ENCODE measurements at regions of chr3 and their contacts with region 1.

Region 1: GRCh38 chr3:194849166-194849875 is 163.6 kb downstream of the FAM43A start:
- DNase-seq: no peak
- ATAC-seq: no peak
- H3K4me3 ChIP-seq: no peak overlapping the region
- H3K27ac ChIP-seq: no peak overlapping the region
- H3K4me1 ChIP-seq: no peaks in the 10 kb centered on the region
- H3K27me3 ChIP-seq: peaks cover 2% of the 10 kb centered on the region; the same call in 1 of the 2 replicates
- CTCF ChIP-seq: no peak
- POLR2A ChIP-seq: no peak
- RAD21 ChIP-seq: no peak

Region 2: DNA sequence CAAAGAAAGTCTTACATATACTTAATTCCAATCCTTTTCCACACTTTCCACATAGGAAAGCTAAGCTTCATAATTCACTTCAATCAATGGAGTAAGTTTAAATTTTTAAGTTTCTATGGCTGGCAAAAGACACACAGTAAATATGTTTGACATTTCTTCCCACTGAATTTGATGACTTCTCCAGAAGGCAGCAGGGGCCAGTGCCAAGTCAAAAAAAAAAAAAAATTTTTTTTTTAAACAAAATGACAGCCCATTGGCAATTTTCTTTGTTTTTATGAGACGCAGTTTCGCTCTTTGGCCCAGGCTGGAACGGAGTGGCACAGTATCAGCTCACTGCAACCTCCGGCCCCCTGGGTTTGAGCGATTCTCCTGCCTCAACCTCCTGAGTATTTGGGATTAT is 391.2 kb before region 1 on chr3:
- CTCF ChIA-PET with region 1: no interaction called
- POLR2A ChIA-PET with region 1: no interaction called
- dilution Hi-C with region 1: no loop called
- in situ Hi-C with region 1: no loop called
- intact Hi-C with region 1: no loop called
- DNase-seq: no peak
- ATAC-seq: no peak
- H3K4me3 ChIP-seq: no peak overlapping the region
- H3K27ac ChIP-seq: no peak overlapping the region
- H3K4me1 ChIP-seq: no peaks in the 10 kb centered on the region; the same call in 1 of the 2 replicates
- H3K27me3 ChIP-seq: no peaks in the 10 kb centered on the region
- CTCF ChIP-seq: no peak
- POLR2A ChIP-seq: no peak
- RAD21 ChIP-seq: no peak

Region 3: GRCh38 chr3:194782698-194783404 is 66.5 kb before region 1 on chr3:
- CTCF ChIA-PET with region 1: no interaction called
- POLR2A ChIA-PET with region 1: no interaction called
- dilution Hi-C with region 1: no loop called
- in situ Hi-C with region 1: no loop called
- intact Hi-C with region 1: loop called (anchors 5 kb)
- DNase-seq: peak; percentile 4
- ATAC-seq: peak; percentile 32
- H3K4me3 ChIP-seq: no peak overlapping the region
- H3K27ac ChIP-seq: no peak overlapping the region
- H3K4me1 ChIP-seq: no peaks in the 10 kb centered on the region
- H3K27me3 ChIP-seq: peaks cover 21% of the 10 kb centered on the region
- CTCF ChIP-seq: no peak
- POLR2A ChIP-seq: no peak
- RAD21 ChIP-seq: no peak